Natural killer cell (primary cell): ENCODE measurements at regions of chr13 and their contacts with region 1.

Region 1: DNA sequence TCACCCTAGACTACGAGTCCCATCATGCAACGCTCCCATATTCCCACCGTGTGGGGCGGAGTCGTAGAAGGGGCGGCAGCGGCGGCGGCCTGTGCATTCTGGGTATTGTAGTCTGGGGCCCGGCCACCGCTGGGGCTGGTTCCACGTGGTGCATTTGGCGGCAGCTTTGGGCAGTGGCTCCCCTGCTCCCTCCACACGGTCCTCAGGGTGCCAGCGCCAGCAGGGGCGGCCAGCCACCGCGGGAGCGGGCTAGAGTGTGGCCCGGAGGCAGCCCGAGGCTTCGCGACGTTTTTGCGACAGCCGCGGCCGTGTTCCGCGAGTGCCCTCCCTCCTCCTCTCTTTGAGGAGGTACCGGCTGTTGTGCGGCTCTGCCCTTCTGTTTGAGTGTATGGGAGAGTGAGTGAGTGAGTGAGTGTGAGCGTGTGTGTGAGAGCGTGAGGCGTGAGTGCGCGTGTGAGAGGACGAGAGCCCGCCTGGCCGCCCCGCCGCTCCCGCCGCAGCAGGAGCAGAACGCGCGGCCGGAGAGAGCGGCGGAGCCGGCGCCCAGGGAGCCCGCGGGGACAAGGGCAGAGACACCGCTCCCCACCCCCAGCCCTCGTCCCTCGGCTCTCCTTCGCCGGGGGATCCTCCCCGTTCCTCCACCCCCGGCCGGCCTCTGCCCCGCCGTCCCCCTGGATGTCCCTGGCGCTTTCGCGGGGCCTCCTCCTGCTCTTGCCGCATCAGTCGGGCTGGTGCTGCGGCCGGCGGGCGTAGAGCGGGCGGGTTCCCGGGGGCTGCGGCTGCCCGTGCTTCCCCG is at the start of gene CDK8:
- DNase-seq: peak; percentile 88 to 94
- ATAC-seq: peak; percentile 86 to 94 (median 87)
- H3K4me3 ChIP-seq: peak within 1 kb of the TSS; percentile 59
- H3K4me3 Mint-ChIP-seq: peak within 1 kb of the TSS; percentile 87
- H3K27ac ChIP-seq: peak within 1 kb of the TSS; percentile 66
- H3K27ac Mint-ChIP-seq: peak within 1 kb of the TSS; percentile 84 to 94
- H3K4me1 ChIP-seq: peaks cover 10% of the 10 kb centered on the region
- H3K4me1 Mint-ChIP-seq: peaks cover 28 to 29% of the 10 kb centered on the region in 2 donors
- H3K27me3 ChIP-seq: peaks cover 2% of the 10 kb centered on the region
- H3K27me3 Mint-ChIP-seq: no peaks in the 10 kb centered on the region
- CTCF ChIP-seq: no peak
- total RNA-seq, gene CDK8: 10.0 to 13.1 (median 10.9) TPM

Region 2: GRCh38 chr13:26221721-26222519 is 32.1 kb before region 1 on chr13 and contains the start of gene RNF6:
- intact Hi-C with region 1: loop called (anchors 1 kb)
- DNase-seq: peak; percentile 87 to 96
- ATAC-seq: peak; percentile 91 to 97 (median 93)
- H3K4me3 ChIP-seq: peak within 1 kb of the TSS; percentile 99
- H3K4me3 Mint-ChIP-seq: peak within 1 kb of the TSS; percentile 92
- H3K27ac ChIP-seq: peak within 1 kb of the TSS; percentile 96
- H3K27ac Mint-ChIP-seq: peak within 1 kb of the TSS; percentile 95 to 98
- H3K4me1 ChIP-seq: peaks cover 13% of the 10 kb centered on the region
- H3K4me1 Mint-ChIP-seq: peaks cover 37 to 43% of the 10 kb centered on the region in 2 donors
- H3K27me3 ChIP-seq: no peaks in the 10 kb centered on the region
- H3K27me3 Mint-ChIP-seq: peaks cover 3 to 10% of the 10 kb centered on the region in 2 donors
- CTCF ChIP-seq: no peak
- total RNA-seq, gene RNF6: 49.8 to 62.3 (median 52.6) TPM